ENCODE measurements at regions of chr14 and their contacts with region 1.

Region 1: DNA sequence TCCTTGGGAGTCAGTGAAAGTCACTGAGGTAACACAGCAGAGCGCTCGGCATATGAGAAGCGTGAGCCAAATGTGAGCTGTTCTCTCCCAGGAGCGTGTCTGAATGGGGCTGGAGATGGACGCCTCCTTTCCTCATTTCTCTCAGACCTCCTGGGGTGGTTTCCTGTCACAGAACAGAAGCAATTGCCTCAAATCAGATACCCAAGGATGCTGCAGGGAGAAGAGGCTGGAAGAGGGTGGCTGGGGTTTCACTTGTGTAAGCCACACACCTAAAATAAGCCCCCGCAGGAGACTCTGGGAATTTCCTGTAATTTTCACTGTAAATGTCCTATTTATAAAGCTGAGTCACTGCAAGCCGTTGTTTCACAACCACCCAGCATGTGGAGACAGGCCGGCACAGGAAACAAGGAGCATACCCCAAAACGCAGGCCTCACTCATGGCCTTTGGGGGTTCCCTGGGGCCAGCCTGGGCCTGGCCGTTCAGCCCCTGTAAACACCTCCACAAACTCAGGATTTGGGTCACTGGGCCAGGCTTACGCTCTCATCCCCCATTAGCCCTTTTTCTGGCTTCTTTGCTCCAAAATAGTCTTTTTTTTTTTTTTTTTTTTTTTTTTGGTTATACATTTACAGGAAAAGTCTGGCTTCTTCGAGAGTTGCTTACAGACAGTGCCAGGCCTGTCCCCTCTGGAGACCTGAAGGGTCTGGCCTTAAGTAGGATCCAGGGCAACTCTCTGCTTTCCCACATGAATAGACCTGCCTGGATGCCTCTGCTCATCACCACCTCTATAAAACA is 55.3 kb downstream of the VCPKMT start:
- DNase-seq: peak; percentile 31 to 77
- H3K4me3 ChIP-seq: peak overlapping the region; percentile 37; the same call in 1 of the 2 replicates
- H3K27ac ChIP-seq: peak overlapping the region; percentile 97
- H3K4me1 ChIP-seq: peaks cover 49% of the 10 kb centered on the region
- H3K27me3 ChIP-seq: no peaks in the 10 kb centered on the region
- CTCF ChIP-seq: no peak

Region 2: GRCh38 chr14:49862089-49862673 is 198.9 kb before region 1 on chr14:
- CTCF ChIA-PET with region 1: interaction called, 9 read pairs
- POLR2A ChIA-PET with region 1: interaction called, 8 read pairs
- intact Hi-C with region 1: loop called (anchors 1 kb)
- DNase-seq: peak; percentile 62 to 81
- H3K4me3 ChIP-seq: peak overlapping the region; percentile 100
- H3K27ac ChIP-seq: peak overlapping the region; percentile 92
- H3K4me1 ChIP-seq: peaks cover 35% of the 10 kb centered on the region; the same call in 1 of the 2 replicates
- H3K27me3 ChIP-seq: no peaks in the 10 kb centered on the region
- CTCF ChIP-seq: peak; percentile 100

Region 3: GRCh38 chr14:49892636-49893308 is 168.3 kb before region 1 on chr14 and contains the start of gene ARF6:
- CTCF ChIA-PET with region 1: interaction called, 3 read pairs
- POLR2A ChIA-PET with region 1: no interaction called
- intact Hi-C with region 1: loop called (anchors 1 kb)
- DNase-seq: peak; percentile 87 to 97
- H3K4me3 ChIP-seq: peak within 1 kb of the TSS; percentile 99
- H3K27ac ChIP-seq: peak within 1 kb of the TSS; percentile 96
- H3K4me1 ChIP-seq: peaks cover 28% of the 10 kb centered on the region
- H3K27me3 ChIP-seq: no peaks in the 10 kb centered on the region
- CTCF ChIP-seq: no peak; the same call in 1 of the 2 replicates
- total RNA-seq, gene ARF6: 46.8 and 65.3 TPM in 2 replicates

Region 4: GRCh38 chr14:50008562-50009350 is 52.3 kb before region 1 on chr14:
- CTCF ChIA-PET with region 1: interaction called, 6 read pairs
- POLR2A ChIA-PET with region 1: interaction called, 11 read pairs
- intact Hi-C with region 1: loop called (anchors 1 kb)
- DNase-seq: peak; percentile 81 to 98
- H3K4me3 ChIP-seq: peak overlapping the region; percentile 58
- H3K27ac ChIP-seq: peak overlapping the region; percentile 100
- H3K4me1 ChIP-seq: peaks cover 78% of the 10 kb centered on the region
- H3K27me3 ChIP-seq: no peaks in the 10 kb centered on the region
- CTCF ChIP-seq: no peak

Region 5: DNA sequence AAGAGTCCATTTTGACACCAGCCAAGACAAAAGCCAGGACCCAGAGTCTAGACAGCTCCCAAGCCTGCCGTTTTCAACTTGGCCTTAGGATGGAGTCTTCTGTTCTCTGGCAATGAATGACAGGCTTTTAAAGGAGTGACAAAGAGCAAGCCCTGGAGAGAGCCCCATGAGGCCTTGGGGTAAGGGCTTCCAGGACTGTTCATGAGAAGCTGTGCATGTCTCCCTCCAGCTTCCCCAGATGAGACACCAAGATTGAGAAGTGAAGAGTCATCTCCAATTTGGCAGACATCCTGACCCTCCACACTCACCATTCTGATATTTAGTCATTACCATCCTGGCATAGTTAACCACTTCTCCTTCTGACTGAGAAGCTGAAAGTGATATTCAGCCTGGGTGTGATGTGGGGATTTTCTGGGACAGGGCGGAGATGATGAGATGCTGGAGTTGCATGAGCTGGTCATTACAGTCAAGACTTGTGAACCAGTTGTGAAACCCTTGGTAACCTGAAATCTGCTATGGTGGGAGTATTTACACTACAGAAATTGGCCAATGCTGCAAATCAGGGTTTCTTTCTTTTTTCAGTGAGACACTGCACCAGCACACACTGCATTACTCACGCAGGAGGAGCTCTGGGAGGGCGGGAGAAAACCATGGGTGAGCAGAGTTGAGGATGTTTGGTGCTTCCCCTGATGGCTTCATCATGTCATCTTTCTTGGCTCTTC is 22.5 kb before region 1 on chr14:
- CTCF ChIA-PET with region 1: interaction called, 4 read pairs
- POLR2A ChIA-PET with region 1: interaction called, 4 read pairs
- intact Hi-C with region 1: loop called (anchors 1 kb)
- DNase-seq: peak in 1 of 2 experiments; percentile 79
- H3K4me3 ChIP-seq: no peak overlapping the region
- H3K27ac ChIP-seq: peak overlapping the region; percentile 98
- H3K4me1 ChIP-seq: peaks cover 78% of the 10 kb centered on the region
- H3K27me3 ChIP-seq: no peaks in the 10 kb centered on the region
- CTCF ChIP-seq: no peak; the same call in 1 of the 2 replicates

Region 6: DNA sequence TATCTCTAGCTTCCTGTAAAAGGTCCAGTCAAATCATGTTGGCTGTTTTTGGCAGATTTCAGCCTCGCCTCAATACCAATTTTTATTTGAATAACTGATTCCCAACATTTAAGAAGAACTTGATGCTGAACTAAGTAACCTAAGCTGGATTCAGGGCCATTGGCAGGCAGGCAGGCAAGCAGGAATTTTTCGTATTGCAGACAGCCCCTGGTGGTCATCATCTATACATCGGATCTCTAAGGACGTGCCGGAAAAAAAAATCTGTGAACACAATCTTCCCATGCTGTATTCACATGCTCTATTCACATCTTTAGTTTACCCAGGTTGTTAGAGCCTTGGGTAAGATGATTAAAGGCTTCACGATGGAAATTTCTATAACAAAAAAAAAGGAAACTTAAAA is 48.3 kb after region 1 on chr14:
- CTCF ChIA-PET with region 1: no interaction called
- POLR2A ChIA-PET with region 1: no interaction called
- intact Hi-C with region 1: loop called (anchors 2 kb)
- DNase-seq: no peak
- H3K4me3 ChIP-seq: no peak overlapping the region
- H3K27ac ChIP-seq: no peak overlapping the region
- H3K4me1 ChIP-seq: peaks cover 7% of the 10 kb centered on the region; the same call in 1 of the 2 replicates
- H3K27me3 ChIP-seq: no peaks in the 10 kb centered on the region
- CTCF ChIP-seq: peak; percentile 34

Measured in PC-9 (cell line).